CD4-positive, alpha-beta memory T cell (primary cell): ENCODE measurements at regions of chr4 and their contacts with region 1.

Region 1: DNA sequence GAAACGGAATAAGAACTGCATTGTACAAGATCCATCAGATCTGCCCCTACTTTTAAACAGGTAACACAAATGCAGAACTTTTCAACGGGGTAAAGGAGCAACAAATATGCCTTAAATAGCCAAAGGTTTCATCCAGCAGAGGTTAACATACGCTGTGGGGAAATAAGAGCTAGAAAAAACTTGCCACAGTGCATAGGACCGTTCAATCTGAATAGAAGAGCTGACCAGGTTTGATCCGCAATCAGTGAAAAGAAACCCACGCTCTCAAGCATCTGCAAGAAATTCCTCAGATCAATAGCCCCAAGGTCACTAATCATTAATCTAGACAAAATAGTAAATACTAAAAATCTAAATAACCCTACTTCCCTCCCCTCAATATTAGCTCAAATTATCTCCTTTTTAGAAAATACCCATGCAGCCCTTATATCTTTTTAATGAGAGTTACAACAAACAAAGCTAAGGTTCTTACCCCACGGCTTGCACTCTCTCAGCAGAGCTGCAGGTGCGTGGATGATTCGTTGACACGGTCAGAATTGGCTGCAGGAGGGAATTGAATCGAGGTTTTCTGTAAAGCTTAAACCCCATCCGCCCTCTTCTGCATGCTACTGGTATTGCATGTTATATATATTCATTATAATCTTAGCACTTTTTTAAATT is at the start of gene TLR10:
- DNase-seq: peak in 4 of 5 donors; percentile 26 to 50 (median 40)
- H3K4me3 ChIP-seq: no peak within 1 kb of the TSS
- H3K4me3 Mint-ChIP-seq: peak within 1 kb of the TSS in 4 of 8 donors; percentile 22 to 62 (median 43)
- H3K27ac ChIP-seq: no peak within 1 kb of the TSS
- H3K27ac Mint-ChIP-seq: no peak within 1 kb of the TSS
- H3K4me1 ChIP-seq: no peaks in the 10 kb centered on the region
- H3K4me1 Mint-ChIP-seq: peaks cover 2 to 5% (median 3%) of the 10 kb centered on the region in 4 donors
- H3K27me3 ChIP-seq: no peaks in the 10 kb centered on the region
- H3K27me3 Mint-ChIP-seq: peaks cover 0 to 2% of the 10 kb centered on the region in 2 donors
- total RNA-seq, gene TLR10: 0.20 to 0.28 TPM

Region 2: DNA sequence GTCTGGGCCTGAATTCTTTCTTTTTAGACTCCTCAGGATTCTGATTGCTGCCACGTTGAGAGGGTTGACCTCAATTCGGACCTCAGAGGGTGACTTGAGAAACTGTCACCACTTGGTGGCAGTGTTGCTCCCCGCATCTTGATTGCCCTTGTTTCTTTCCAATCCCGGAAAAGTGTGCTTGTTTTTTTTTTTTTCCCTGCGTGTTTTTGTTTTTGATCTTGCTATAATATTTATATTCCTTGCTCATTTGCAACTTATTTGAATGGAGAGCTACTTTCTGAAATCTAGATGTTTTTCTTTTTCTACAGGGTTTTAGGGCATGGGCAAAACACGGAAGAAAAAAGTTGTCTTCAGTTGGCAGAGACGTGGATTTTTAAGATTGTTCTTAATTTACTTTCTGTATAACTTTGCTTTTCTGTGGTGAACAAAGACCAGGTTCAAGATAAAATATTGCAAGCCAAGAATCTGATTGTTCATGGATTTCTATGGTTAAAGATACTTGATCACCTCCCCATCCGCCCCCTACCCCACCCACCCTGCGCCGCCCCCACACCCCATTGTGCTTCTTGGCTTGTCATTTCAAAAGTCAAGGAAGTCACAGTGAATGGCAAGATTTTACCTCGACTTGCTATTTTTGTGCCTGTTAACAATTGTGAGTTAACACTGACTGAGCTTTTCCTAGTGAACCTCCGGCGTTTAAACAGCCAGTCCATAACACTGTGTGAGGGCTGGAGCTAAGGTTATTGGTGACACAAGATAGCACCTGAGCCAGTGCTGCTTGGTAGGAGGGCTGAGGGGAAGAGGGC is 720.3 kb before region 1 on chr4:
- CTCF ChIA-PET with region 1: interaction called, 19 read pairs
- POLR2A ChIA-PET with region 1: no interaction called
- intact Hi-C with region 1: loop called (anchors 1 kb)
- DNase-seq: peak; percentile 38 to 51 (median 49)
- H3K4me3 ChIP-seq: peak overlapping the region in 1 of 2 donors; percentile 42
- H3K4me3 Mint-ChIP-seq: peak overlapping the region; percentile 73 to 94 (median 87)
- H3K27ac ChIP-seq: no peak overlapping the region
- H3K27ac Mint-ChIP-seq: peak overlapping the region; percentile 20 to 91 (median 72)
- H3K4me1 ChIP-seq: peaks cover 4% of the 10 kb centered on the region
- H3K4me1 Mint-ChIP-seq: peaks cover 7 to 16% (median 8%) of the 10 kb centered on the region in 4 donors
- H3K27me3 ChIP-seq: no peaks in the 10 kb centered on the region
- H3K27me3 Mint-ChIP-seq: no peaks in the 10 kb centered on the region

Region 3: DNA sequence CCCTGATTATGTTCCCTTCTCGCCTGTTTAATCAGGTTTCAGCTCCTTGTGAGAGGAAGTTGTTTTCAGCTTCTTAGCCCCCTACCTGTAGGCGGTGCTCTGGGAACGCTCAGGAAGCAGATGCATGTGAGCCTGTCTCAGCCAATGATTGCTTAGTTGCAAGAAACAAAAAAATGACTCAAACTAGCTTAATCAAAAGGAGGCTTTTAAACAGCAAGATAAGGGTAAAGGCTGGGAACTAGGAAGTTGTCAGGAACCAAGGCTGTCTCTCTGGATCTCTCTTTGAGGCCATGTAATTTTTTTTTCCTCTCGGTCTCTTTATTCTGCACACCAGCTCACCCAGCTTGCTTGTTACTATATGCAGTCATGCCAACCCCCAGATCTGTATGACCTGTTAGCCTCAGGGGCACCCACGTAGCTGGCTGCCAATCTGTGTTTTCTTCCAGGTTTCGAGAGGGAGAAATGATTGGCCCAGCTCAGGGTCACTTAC is 713.3 kb before region 1 on chr4:
- CTCF ChIA-PET with region 1: interaction called, 15 read pairs
- POLR2A ChIA-PET with region 1: no interaction called
- intact Hi-C with region 1: no loop called
- DNase-seq: peak in 4 of 5 donors; percentile 4 to 52 (median 19)
- H3K4me3 ChIP-seq: no peak overlapping the region
- H3K4me3 Mint-ChIP-seq: no peak overlapping the region
- H3K27ac ChIP-seq: no peak overlapping the region
- H3K27ac Mint-ChIP-seq: peak overlapping the region in 1 of 7 donors; percentile 14
- H3K4me1 ChIP-seq: no peaks in the 10 kb centered on the region
- H3K4me1 Mint-ChIP-seq: peaks cover 2 to 9% (median 4%) of the 10 kb centered on the region in 4 donors
- H3K27me3 ChIP-seq: no peaks in the 10 kb centered on the region
- H3K27me3 Mint-ChIP-seq: no peaks in the 10 kb centered on the region

Region 4: DNA sequence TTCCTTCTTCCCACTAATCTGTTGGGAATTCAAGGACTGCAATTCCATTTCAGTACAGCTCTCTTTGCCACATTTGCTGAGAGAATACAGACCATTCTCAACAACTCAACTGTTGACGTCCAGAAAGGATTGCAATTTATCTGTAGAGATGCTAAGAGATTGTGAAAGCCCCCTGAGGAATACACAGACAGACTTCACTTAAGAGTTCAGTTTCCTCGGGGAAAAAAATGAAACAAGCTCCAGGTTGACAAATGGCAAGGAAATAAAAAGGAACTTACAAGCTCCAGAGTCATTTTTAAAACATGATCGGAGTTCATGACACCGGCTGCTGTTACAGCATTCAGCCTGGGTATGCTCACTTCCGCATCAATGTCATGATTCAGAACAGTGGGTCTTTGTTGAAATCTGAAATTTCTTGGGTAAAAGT is 13.6 kb before region 1 on chr4:
- CTCF ChIA-PET with region 1: interaction called, 16 read pairs
- POLR2A ChIA-PET with region 1: no interaction called
- intact Hi-C with region 1: no loop called
- DNase-seq: no peak
- H3K4me3 ChIP-seq: no peak overlapping the region
- H3K4me3 Mint-ChIP-seq: no peak overlapping the region
- H3K27ac ChIP-seq: no peak overlapping the region
- H3K27ac Mint-ChIP-seq: no peak overlapping the region
- H3K4me1 ChIP-seq: no peaks in the 10 kb centered on the region
- H3K4me1 Mint-ChIP-seq: no peaks in the 10 kb centered on the region
- H3K27me3 ChIP-seq: no peaks in the 10 kb centered on the region
- H3K27me3 Mint-ChIP-seq: peaks cover 0 to under 1% of the 10 kb centered on the region in 2 donors

Region 5: GRCh38 chr4:38795087-38795486 is 12.5 kb after region 1 on chr4:
- CTCF ChIA-PET with region 1: interaction called, 86 read pairs
- POLR2A ChIA-PET with region 1: no interaction called
- intact Hi-C with region 1: no loop called
- DNase-seq: no peak
- H3K4me3 ChIP-seq: no peak overlapping the region
- H3K4me3 Mint-ChIP-seq: no peak overlapping the region
- H3K27ac ChIP-seq: no peak overlapping the region
- H3K27ac Mint-ChIP-seq: no peak overlapping the region
- H3K4me1 ChIP-seq: no peaks in the 10 kb centered on the region
- H3K4me1 Mint-ChIP-seq: peaks cover 0 to 4% (median 2%) of the 10 kb centered on the region in 4 donors
- H3K27me3 ChIP-seq: no peaks in the 10 kb centered on the region
- H3K27me3 Mint-ChIP-seq: no peaks in the 10 kb centered on the region

Region 6: DNA sequence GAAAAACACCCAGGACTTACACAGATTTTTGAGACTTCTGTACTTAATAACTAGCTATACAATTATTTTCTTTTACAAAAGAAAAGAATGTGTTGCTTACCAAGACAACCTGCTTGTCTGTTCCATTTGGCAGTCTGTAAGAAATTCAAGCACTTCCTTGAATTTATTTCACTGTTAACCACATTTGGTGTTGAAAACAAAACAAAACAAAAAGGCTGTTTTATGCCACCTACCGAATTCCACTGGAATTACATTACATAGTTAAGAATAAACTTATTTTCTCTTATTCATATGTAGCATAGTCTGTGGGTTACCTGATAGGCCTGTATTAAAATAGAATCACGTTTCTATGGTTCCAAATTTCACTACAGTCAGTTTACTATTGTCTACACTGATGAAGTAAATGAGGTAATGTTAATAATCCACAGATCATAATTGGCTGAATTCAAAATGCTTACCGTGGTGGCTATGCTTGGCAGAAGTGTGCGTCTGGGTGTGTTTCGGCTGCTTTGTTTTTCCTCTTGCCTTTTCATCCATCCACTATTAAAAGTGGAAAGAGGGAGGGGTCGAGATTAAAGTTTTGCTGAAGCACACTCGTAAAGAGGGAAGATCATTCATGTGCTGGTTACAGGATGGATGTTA is 22.2 kb after region 1 on chr4 and contains the start of gene TLR1:
- CTCF ChIA-PET with region 1: interaction called, 86 read pairs
- POLR2A ChIA-PET with region 1: interaction called, 6 read pairs
- intact Hi-C with region 1: loop called (anchors 1 kb)
- DNase-seq: peak in 4 of 5 donors; percentile 65 to 71 (median 65)
- H3K4me3 ChIP-seq: peak within 1 kb of the TSS; percentile 54 to 57
- H3K4me3 Mint-ChIP-seq: peak within 1 kb of the TSS; percentile 90 to 96 (median 92)
- H3K27ac ChIP-seq: peak within 1 kb of the TSS; percentile 47
- H3K27ac Mint-ChIP-seq: peak within 1 kb of the TSS; percentile 84 to 99 (median 94)
- H3K4me1 ChIP-seq: peaks cover 25% of the 10 kb centered on the region
- H3K4me1 Mint-ChIP-seq: peaks cover 24 to 45% (median 35%) of the 10 kb centered on the region in 4 donors
- H3K27me3 ChIP-seq: no peaks in the 10 kb centered on the region
- H3K27me3 Mint-ChIP-seq: no peaks in the 10 kb centered on the region
- total RNA-seq, gene TLR1: 20.6 to 24.3 TPM